Heart right ventricle (tissue), 16 donors: ENCODE measurements at regions of chr2 and their contacts with region 1.

Region 1: DNA sequence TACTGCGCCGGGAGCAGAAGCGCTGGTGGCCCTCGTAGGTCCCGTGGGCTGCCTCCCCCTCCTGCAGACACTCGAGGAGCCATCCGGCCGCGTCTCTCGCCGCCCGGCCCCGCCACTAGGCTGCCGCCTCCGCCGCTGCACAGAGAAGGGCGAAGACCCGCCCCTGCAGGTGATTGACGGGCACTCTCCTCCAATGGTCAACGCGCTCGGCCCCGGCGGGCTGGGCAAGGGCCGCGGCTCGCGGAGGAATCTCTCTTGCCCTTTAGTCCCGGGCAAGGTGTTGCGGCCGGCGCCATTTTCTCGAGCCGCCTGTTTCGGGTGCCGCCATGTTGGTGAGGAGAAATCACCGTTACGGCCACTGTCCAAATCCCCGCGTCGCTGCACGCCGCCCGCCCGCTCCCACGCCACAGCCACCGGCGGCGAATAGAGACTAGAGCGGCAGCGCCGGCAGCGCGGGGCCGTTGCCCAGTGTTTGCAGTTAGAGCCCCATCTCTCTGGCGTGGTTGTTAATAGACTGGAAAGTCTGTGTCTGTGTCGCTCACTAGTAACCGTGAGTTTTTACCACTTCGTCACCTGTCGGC is at the start of gene ZC3H6:
- DNase-seq: peak; percentile 99 to 100
- ATAC-seq: peak; percentile 98 to 99 (median 99)
- H3K4me3 ChIP-seq: peak within 1 kb of the TSS; percentile 71 to 94 (median 82)
- H3K27ac ChIP-seq: peak within 1 kb of the TSS; percentile 99 to 100 (median 100)
- H3K4me1 ChIP-seq: peaks cover 0 to 28% (median 11%) of the 10 kb centered on the region in 9 donors
- H3K27me3 ChIP-seq: no peaks in the 10 kb centered on the region
- CTCF ChIP-seq: peak in 5 of 9 donors; percentile 15 to 42 (median 27)
- total RNA-seq, gene ZC3H6: 13.9 to 29.5 (median 25.8) TPM

Region 2: DNA sequence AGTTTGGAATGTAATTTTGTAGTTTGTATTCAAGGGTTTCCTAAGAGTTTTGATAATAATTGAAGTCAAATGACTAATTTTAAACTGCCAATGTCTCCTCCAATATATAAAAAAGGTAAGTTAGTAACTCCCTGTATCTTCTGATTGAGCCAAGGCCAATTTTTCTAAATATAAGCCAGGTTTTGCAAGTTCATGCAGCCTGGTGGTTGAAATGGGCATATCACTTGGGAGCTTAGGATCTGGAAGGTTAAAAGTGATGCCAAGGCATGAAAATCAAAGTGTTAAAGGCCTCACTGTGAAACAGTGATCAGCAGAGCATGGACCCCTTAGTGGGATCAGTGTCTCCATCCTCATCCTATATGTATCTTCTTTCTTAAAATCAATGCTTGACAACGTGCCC is 316.5 kb before region 1 on chr2:
- intact Hi-C with region 1: no loop called
- DNase-seq: no peak
- ATAC-seq: no peak
- H3K4me3 ChIP-seq: no peak overlapping the region
- H3K27ac ChIP-seq: peak overlapping the region in 4 of 10 donors; percentile 53 to 72 (median 60)
- H3K4me1 ChIP-seq: peaks cover 0 to 50% (median 22%) of the 10 kb centered on the region in 9 donors
- H3K27me3 ChIP-seq: no peaks in the 10 kb centered on the region
- CTCF ChIP-seq: peak in 2 of 9 donors; percentile 15 to 29

Region 3: DNA sequence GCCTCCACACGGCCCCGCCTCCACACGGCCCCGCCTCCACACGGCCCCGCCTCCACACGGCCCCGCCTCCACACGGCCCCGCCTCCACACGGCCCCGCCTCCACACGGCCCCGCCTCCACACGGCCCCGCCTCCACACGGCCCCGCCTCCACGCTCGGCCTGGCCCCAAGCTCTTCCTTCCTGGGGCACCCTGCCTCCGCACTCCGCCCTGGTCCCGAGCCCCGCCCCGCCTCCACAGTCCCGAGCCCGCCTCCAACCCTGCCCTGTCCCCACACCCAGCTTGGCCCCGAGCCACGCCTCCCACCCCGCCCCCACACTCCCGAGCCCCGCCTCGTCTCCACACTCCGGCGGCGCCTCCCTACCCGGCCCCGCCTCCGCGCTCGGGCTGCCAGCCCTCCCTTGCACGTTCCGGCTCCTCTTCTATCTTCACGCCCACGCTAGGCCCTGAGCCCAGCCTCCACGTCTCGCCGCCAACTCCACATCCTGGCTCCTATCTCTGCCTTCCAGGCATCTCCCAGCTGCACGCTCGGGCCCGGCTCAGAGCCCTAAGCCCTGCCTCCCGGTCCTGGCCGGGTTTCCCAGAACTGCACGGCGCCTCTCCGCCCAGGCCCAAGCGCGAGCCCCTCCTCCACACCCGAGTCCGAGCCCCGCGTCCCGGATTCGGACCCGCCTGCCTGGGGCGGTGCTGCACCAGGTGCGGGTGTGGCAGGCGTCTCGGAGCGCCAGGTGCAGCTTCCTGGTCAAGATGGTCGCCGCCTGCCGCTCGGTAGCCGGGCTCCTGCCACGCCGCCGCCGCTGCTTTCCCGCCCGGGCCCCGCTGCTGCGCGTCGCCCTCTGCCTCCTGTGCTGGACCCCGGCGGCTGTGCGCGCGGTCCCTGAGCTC is 220.3 kb before region 1 on chr2 and contains the start of gene TMEM87B:
- intact Hi-C with region 1: loop called in 2 of 10 experiments (anchors 5 to 10 kb)
- DNase-seq: peak; percentile 98 to 100
- ATAC-seq: peak; percentile 84 to 93 (median 87)
- H3K4me3 ChIP-seq: peak within 1 kb of the TSS; percentile 79 to 96 (median 84)
- H3K27ac ChIP-seq: peak within 1 kb of the TSS; percentile 92 to 100 (median 98)
- H3K4me1 ChIP-seq: peaks cover 0 to 44% (median 27%) of the 10 kb centered on the region in 9 donors
- H3K27me3 ChIP-seq: no peaks in the 10 kb centered on the region
- CTCF ChIP-seq: no peak
- total RNA-seq, gene TMEM87B: 4.4 to 11.1 (median 5.7) TPM

Region 4: GRCh38 chr2:112542123-112542983 is 267.0 kb after region 1 on chr2 and contains the start of gene POLR1B:
- intact Hi-C with region 1: loop called in 1 of 10 experiments (anchors 2 kb)
- DNase-seq: peak; percentile 82 to 87
- ATAC-seq: peak; percentile 95 to 98 (median 96)
- H3K4me3 ChIP-seq: peak within 1 kb of the TSS; percentile 70 to 99 (median 80)
- H3K27ac ChIP-seq: peak within 1 kb of the TSS; percentile 65 to 96 (median 88)
- H3K4me1 ChIP-seq: peaks cover 5 to 24% (median 17%) of the 10 kb centered on the region in 9 donors
- H3K27me3 ChIP-seq: no peaks in the 10 kb centered on the region
- CTCF ChIP-seq: peak in 1 of 9 donors; percentile 9
- total RNA-seq, gene POLR1B: 6.4 to 15.3 (median 11.0) TPM

Region 5: DNA sequence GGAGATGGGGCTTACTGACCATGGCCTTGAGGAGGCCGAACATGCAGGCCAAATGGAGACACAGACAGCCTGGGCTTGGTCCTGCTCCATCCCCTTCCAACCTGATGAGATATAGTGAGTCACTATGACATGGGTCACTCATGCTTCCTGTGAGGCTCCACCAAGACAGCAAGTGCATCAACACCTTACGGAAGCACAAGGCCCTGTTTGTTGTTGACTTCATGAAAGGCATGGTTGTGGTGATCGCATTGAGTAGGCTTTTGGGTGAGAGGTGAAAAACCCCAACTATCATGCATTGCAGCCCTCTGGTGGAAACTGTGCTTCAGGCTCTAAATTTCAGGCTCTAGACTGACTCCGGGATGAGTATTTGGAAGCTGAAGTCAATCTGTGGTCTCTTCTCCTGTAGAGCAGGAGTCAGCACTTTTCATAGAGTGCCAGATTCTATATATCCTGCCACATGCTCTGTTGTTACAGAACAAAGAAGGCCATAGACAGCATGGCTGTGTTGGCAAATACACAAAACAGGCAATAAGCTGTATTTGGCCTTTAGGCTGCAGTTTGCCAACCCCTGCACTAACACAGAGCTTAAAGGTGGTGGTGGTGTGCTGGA is 645.6 kb after region 1 on chr2:
- intact Hi-C with region 1: no loop called
- DNase-seq: no peak
- ATAC-seq: no peak
- H3K4me3 ChIP-seq: no peak overlapping the region
- H3K27ac ChIP-seq: no peak overlapping the region
- H3K4me1 ChIP-seq: no peaks in the 10 kb centered on the region
- H3K27me3 ChIP-seq: peaks cover 0 to 17% (median 6%) of the 10 kb centered on the region in 7 donors
- CTCF ChIP-seq: no peak